H1 (cell line): ENCODE measurements at regions of chr7 and their contacts with region 1.

Region 1: GRCh38 chr7:95690367-95690947 is 81.9 kb upstream of the DYNC1I1 start:
- DNase-seq: no peak
- H3K4me3 ChIP-seq: peak overlapping the region in 1 of 4 experiments; percentile 41; a peak in 1 of 8 replicates
- H3K27ac ChIP-seq: no peak overlapping the region
- H3K4me1 ChIP-seq: no peaks in the 10 kb centered on the region
- H3K27me3 ChIP-seq: no peaks in the 10 kb centered on the region
- CTCF ChIP-seq: peak in 2 of 3 experiments; percentile 42 to 53; a peak in 3 of 4 replicates
- EP300 ChIP-seq: no peak
- POLR2A ChIP-seq: no peak
- RAD21 ChIP-seq: peak; percentile 48

Region 2: GRCh38 chr7:95491634-95492320 is 198.7 kb before region 1 on chr7:
- CTCF ChIA-PET with region 1: interaction called, 27 read pairs
- POLR2A ChIA-PET with region 1: no interaction called
- DNase-seq: no peak
- H3K4me3 ChIP-seq: no peak overlapping the region
- H3K27ac ChIP-seq: no peak overlapping the region
- H3K4me1 ChIP-seq: peaks cover 4 to 8% (median 6%) of the 10 kb centered on the region in 4 experiments; a peak in 4 of 7 replicates
- H3K27me3 ChIP-seq: no peaks in the 10 kb centered on the region
- CTCF ChIP-seq: no peak
- EP300 ChIP-seq: no peak
- POLR2A ChIP-seq: no peak
- RAD21 ChIP-seq: no peak

Region 3: DNA sequence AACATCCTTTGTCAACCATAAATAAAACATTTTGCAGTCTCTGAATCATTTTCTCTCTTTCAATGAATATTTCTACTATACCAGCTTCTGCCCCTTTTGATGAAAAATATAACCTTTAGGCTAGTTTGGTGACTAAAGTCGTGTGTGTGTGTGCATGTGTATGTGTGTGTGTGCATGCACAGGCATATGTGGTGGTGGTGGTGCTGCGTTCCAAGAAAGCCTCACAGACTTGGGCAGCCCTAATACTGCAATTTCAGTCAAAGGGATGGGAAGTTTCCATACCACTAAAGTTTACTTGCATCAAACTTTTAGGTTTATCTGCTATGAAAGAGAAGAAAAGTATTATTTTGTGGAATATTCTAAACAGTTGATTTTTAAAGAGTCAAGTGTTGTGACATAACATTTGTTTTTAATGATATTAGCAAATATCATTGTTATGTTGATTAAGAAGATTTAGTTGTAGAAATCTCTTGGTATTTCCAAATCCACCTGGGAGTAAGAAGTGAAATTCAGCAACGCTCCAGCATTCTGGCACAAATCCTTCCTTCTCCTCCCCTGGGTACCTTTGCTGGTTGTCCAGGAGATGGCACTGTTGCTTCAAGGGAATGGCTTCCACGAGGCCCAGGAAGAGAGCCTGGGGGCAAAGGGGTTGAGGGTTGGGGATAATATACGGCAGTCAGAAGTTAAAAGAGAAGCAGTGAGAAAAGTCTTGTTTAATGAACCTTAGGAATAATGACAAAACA is 163.3 kb before region 1 on chr7:
- CTCF ChIA-PET with region 1: interaction called, 482 read pairs
- POLR2A ChIA-PET with region 1: no interaction called
- DNase-seq: peak in 1 of 2 experiments; percentile 67
- H3K4me3 ChIP-seq: no peak overlapping the region
- H3K27ac ChIP-seq: no peak overlapping the region
- H3K4me1 ChIP-seq: no peaks in the 10 kb centered on the region
- H3K27me3 ChIP-seq: no peaks in the 10 kb centered on the region
- CTCF ChIP-seq: peak; percentile 83 to 94 (median 86)
- EP300 ChIP-seq: no peak
- POLR2A ChIP-seq: no peak
- RAD21 ChIP-seq: peak; percentile 98

Region 4: GRCh38 chr7:95596198-95597063 is 94.0 kb before region 1 on chr7 and contains the start of gene PDK4:
- CTCF ChIA-PET with region 1: interaction called, 10 read pairs
- POLR2A ChIA-PET with region 1: no interaction called
- DNase-seq: peak in 1 of 2 experiments; percentile 85
- H3K4me3 ChIP-seq: peak within 1 kb of the TSS; percentile 60 to 81 (median 68)
- H3K27ac ChIP-seq: no peak within 1 kb of the TSS
- H3K4me1 ChIP-seq: no peaks in the 10 kb centered on the region; a peak in 1 of 7 replicates
- H3K27me3 ChIP-seq: peaks cover 0 to 25% (median 18%) of the 10 kb centered on the region in 4 experiments; a peak in 6 of 7 replicates
- CTCF ChIP-seq: no peak
- EP300 ChIP-seq: no peak
- POLR2A ChIP-seq: no peak
- RAD21 ChIP-seq: no peak
- total RNA-seq, gene PDK4: 0.23 and 0.26 TPM in 2 replicates

Region 5: DNA sequence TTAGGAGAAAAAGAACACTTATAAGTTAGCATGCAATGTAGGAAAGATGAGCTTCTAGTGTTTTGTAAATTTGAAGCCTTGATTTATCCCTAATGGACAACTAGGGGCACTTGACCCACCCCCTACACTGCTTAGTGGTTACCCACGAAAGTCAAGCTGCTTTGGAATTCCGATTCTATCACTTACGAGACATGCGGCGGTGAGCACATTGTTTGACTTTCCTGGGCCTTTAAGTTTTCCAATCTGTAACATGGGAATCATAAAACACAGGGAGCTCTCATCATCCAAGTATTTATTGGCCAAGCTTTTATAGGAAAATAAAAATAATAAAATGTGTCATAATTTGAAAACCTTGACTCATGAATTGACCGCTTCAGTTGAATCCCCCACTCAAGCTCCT is 15.4 kb before region 1 on chr7:
- CTCF ChIA-PET with region 1: interaction called, 35 read pairs
- POLR2A ChIA-PET with region 1: no interaction called
- DNase-seq: no peak
- H3K4me3 ChIP-seq: no peak overlapping the region
- H3K27ac ChIP-seq: no peak overlapping the region
- H3K4me1 ChIP-seq: no peaks in the 10 kb centered on the region
- H3K27me3 ChIP-seq: no peaks in the 10 kb centered on the region
- CTCF ChIP-seq: no peak
- EP300 ChIP-seq: no peak
- POLR2A ChIP-seq: no peak
- RAD21 ChIP-seq: no peak

Region 6: DNA sequence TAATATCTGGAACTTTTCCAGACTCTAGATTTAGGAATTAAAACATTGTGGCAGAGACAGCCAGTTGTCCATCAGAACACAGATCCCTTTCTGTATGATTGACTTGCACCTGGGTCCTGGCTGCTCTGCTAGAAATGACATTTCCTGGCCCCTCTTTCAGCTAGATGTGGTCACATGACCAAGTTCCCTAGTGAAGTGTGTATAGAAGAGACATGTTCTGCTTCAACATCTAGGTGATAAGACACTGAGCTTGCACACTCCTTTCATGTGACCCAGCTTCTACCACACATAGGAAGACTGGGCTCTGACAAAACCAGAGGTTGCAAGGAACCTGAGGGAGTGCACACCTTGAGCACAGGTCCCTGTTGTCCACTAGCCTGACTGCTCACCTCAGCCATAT is 59.1 kb after region 1 on chr7:
- CTCF ChIA-PET with region 1: no interaction called
- POLR2A ChIA-PET with region 1: no interaction called
- DNase-seq: no peak
- H3K4me3 ChIP-seq: no peak overlapping the region
- H3K27ac ChIP-seq: no peak overlapping the region
- H3K4me1 ChIP-seq: no peaks in the 10 kb centered on the region
- H3K27me3 ChIP-seq: no peaks in the 10 kb centered on the region
- CTCF ChIP-seq: no peak
- EP300 ChIP-seq: no peak
- POLR2A ChIP-seq: no peak
- RAD21 ChIP-seq: no peak

Region 7: DNA sequence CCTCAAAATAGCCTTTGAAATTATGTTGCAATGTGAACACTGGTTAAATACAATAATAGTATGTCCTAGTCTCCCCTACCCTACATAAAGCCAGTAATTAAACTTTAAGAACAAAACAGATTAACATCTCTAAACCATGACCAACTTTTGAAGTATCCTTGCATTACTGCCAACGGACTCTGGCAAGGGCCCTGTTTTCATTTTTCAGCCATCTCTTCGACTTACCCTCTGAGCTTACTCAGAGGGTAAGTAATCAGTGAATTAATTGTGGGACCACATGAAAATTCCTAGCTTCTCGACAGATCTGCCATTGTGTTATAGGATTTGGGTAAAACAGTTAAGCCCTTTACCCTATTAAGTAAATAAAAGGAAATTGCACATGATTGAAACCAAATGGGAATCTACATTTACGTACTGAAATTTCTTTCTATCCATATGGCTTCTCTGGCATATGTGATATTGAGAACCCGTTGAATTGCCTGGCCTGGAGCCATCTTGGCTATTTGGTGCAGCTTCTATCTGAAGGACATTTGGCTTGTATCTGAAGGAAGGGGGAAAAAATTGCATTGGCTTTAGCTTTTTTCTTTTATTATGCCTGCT is 121.5 kb after region 1 on chr7:
- CTCF ChIA-PET with region 1: no interaction called
- POLR2A ChIA-PET with region 1: no interaction called
- DNase-seq: no peak
- H3K4me3 ChIP-seq: no peak overlapping the region
- H3K27ac ChIP-seq: no peak overlapping the region
- H3K4me1 ChIP-seq: no peaks in the 10 kb centered on the region
- H3K27me3 ChIP-seq: no peaks in the 10 kb centered on the region
- CTCF ChIP-seq: no peak
- EP300 ChIP-seq: no peak
- POLR2A ChIP-seq: no peak
- RAD21 ChIP-seq: no peak